ENCODE measurements at regions of chr9 and their contacts with region 1.

Region 1: DNA sequence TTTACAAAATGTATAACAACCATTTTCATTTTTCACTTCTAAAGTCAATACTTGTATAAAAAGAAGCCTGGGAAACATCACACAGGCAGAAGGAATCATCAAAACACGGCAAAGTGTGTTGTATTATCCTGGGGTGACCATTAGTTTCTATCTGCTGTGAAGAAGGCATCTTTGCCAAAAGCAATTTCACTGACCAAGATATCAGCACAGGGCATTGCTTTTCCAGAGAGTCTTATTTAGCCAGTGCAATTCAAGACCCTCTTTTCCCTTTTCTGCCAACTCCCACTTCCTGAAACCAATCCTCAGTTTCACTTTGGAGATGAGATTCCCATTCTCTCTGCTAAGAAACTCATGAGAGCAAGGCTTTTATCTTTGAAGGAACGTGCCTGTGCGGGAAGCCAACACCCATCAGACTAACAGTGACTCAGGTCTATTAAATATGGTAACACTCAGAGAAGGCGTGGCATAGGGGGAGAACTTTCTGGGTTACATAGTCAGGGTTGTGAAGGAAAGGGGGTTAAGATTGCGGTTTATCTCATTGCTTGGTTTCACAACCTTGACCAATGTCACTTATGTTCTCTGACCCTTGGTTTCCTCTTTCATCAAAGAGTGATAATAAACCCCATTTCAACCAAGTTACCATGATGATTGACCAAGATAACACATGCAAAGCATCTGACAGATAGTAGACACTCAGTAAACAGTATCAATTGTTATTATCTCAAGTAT is 666.9 kb upstream of the KLF4 start:
- DNase-seq: no peak
- ATAC-seq: no peak
- H3K4me3 ChIP-seq: no peak overlapping the region
- H3K27ac ChIP-seq: no peak overlapping the region
- H3K4me1 ChIP-seq: no peaks in the 10 kb centered on the region
- H3K27me3 ChIP-seq: peaks cover 0 to 3% (median 0%) of the 10 kb centered on the region in 3 donors
- CTCF ChIP-seq: no peak
- POLR2A ChIP-seq: no peak

Region 2: DNA sequence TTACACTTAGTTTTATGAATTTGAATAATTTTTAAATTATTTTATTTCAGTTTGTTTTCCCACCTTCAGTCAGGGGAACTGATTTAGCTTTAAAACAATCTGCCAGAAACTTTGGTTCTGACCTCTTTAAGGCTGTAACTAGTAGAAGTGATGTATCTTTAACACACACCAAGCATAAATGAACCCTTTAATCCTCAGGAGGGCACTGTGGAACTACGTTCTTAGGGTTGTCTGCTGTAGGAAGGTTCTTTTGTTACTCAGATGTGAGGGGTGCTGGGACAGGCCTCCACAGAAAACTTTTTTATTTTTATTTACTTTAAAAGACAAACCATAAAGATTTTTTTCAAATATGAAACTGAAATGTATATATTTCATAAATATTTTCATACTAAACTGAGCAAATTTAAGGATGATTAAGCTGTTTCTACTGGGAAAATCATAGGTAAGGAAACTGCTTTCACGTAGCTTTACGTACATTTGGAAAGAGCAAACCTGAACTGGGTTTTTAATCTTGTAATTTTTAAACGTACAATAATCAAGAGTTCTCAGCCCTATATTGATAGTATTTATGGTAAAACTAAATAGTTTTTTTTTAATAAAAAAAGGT is 672.2 kb before region 1 on chr9:
- in situ Hi-C with region 1: no loop called
- intact Hi-C with region 1: loop called (anchors 5 kb)
- DNase-seq: peak in 1 of 2 donors; percentile 28
- ATAC-seq: peak; percentile 67 to 77
- H3K4me3 ChIP-seq: peak overlapping the region in 3 of 4 donors; percentile 2 to 84 (median 81)
- H3K27ac ChIP-seq: peak overlapping the region; percentile 82 to 90 (median 90)
- H3K4me1 ChIP-seq: peaks cover 6% of the 10 kb centered on the region in 2 donors
- H3K27me3 ChIP-seq: no peaks in the 10 kb centered on the region
- CTCF ChIP-seq: peak; percentile 31 to 68 (median 51)
- POLR2A ChIP-seq: no peak

Region 3: GRCh38 chr9:107693625-107694326 is 462.7 kb before region 1 on chr9:
- in situ Hi-C with region 1: no loop called
- intact Hi-C with region 1: no loop called
- DNase-seq: no peak
- ATAC-seq: no peak
- H3K4me3 ChIP-seq: no peak overlapping the region
- H3K27ac ChIP-seq: no peak overlapping the region
- H3K4me1 ChIP-seq: no peaks in the 10 kb centered on the region
- H3K27me3 ChIP-seq: no peaks in the 10 kb centered on the region
- CTCF ChIP-seq: no peak
- POLR2A ChIP-seq: no peak

Measured in gastrocnemius medialis (tissue), 4 donors.